ENCODE measurements at regions of chr2 and their contacts with region 1.

Region 1: DNA sequence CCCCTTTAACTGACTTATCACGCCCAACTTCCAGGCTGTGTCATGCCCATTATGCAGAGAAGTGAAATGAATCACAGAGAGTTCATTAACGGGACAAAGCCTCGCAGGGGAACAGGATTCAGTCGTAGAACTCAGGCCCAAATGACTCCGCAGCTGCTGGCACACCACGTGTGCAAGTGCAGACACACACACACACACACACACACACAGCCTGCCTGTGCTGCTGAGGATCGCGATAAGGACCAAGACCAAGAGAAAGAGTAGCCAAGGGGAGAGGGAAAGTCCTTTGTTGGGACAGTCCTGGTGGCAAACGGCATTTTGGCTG is 90.0 kb upstream of the TAF1B start:
- DNase-seq: no peak
- ATAC-seq: peak; percentile 81
- H3K4me3 ChIP-seq: peak overlapping the region; percentile 34
- H3K4me3 Mint-ChIP-seq: peak overlapping the region in 7 of 10 donors; percentile 42 to 92 (median 65)
- H3K27ac ChIP-seq: no peak overlapping the region
- H3K27ac Mint-ChIP-seq: peak overlapping the region in 6 of 9 donors; percentile 9 to 98 (median 62)
- H3K4me1 ChIP-seq: peaks cover 24 to 28% of the 10 kb centered on the region in 2 donors
- H3K4me1 Mint-ChIP-seq: peaks cover 17 to 57% (median 32%) of the 10 kb centered on the region in 7 donors
- H3K27me3 ChIP-seq: no peaks in the 10 kb centered on the region
- H3K27me3 Mint-ChIP-seq: peaks cover 16 to 36% (median 20%) of the 10 kb centered on the region in 5 donors

Region 2: GRCh38 chr2:9656270-9656766 is 96.9 kb before region 1 on chr2:
- CTCF ChIA-PET with region 1: no interaction called
- POLR2A ChIA-PET with region 1: no interaction called
- intact Hi-C with region 1: loop called in 1 of 2 experiments (anchors 2 kb)
- DNase-seq: peak in 1 of 9 donors; percentile 63
- ATAC-seq: peak; percentile 86
- H3K4me3 ChIP-seq: no peak overlapping the region
- H3K4me3 Mint-ChIP-seq: peak overlapping the region in 1 of 10 donors; percentile 68
- H3K27ac ChIP-seq: no peak overlapping the region
- H3K27ac Mint-ChIP-seq: peak overlapping the region in 1 of 9 donors; percentile 83
- H3K4me1 ChIP-seq: peaks cover 0 to 11% of the 10 kb centered on the region in 2 donors
- H3K4me1 Mint-ChIP-seq: peaks cover 0 to 36% (median 0%) of the 10 kb centered on the region in 7 donors
- H3K27me3 ChIP-seq: no peaks in the 10 kb centered on the region
- H3K27me3 Mint-ChIP-seq: peaks cover 0 to 8% (median 0%) of the 10 kb centered on the region in 5 donors

Region 3: DNA sequence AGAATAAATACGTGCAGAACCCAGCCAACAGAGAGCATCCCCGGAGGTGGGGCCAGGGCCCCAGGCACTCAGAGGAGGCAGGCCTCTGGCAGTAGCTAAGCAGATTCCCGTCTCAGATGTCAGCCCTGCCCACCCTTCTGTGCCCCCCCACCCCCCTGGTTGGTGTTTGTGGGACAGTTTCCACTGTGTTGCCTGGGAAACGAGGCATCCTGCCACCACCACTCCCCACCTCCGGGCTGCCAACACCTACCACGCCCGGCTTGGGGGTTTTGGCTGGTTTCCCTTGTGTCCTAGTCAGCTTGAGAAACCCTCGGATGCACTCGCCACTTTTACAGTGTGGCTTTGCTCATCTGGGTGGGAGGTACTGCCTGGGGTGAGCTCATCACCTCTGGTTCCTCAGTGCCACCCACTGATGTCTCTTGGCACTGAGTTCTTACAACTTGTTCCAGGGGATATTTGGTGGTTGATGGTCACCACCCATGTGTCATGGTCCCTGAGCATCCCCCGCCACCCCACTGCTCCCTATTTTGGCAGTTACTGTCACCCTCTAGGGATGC is 50.1 kb before region 1 on chr2:
- CTCF ChIA-PET with region 1: no interaction called
- POLR2A ChIA-PET with region 1: no interaction called
- intact Hi-C with region 1: loop called in 1 of 2 experiments (anchors 5 kb)
- DNase-seq: peak in 8 of 9 donors; percentile 7 to 77 (median 44)
- ATAC-seq: peak; percentile 90
- H3K4me3 ChIP-seq: peak overlapping the region; percentile 16
- H3K4me3 Mint-ChIP-seq: peak overlapping the region in 2 of 10 donors; percentile 23 to 26
- H3K27ac ChIP-seq: no peak overlapping the region
- H3K27ac Mint-ChIP-seq: peak overlapping the region in 1 of 9 donors; percentile 78
- H3K4me1 ChIP-seq: peaks cover 7 to 31% of the 10 kb centered on the region in 2 donors
- H3K4me1 Mint-ChIP-seq: peaks cover 8 to 39% (median 13%) of the 10 kb centered on the region in 7 donors
- H3K27me3 ChIP-seq: no peaks in the 10 kb centered on the region
- H3K27me3 Mint-ChIP-seq: peaks cover 0 to 4% (median 0%) of the 10 kb centered on the region in 5 donors

Region 4: DNA sequence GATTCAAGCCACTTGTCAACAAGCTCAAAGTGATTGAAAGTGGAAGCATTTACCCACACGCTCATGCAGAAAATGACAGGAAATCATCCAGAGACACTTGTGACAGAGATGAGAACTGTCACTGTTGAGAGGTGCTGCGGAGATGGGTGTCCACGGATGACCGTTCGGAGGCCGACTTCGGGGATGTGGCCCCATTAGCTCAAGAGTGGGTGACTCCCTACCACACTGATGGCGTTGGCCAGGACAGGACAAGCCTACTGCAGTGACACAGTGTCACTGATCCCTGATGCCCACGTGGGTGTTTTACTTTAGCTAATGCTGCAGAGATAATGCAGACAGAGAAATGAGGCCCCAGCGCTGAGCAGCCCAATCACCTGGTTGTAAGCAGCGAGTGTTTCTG is 41.0 kb before region 1 on chr2:
- CTCF ChIA-PET with region 1: no interaction called
- POLR2A ChIA-PET with region 1: no interaction called
- intact Hi-C with region 1: loop called in 1 of 2 experiments (anchors 2 kb)
- DNase-seq: peak in 1 of 9 donors; percentile 43
- ATAC-seq: peak; percentile 30
- H3K4me3 ChIP-seq: peak overlapping the region; percentile 25
- H3K4me3 Mint-ChIP-seq: peak overlapping the region in 2 of 10 donors; percentile 15 to 54
- H3K27ac ChIP-seq: peak overlapping the region; percentile 1
- H3K27ac Mint-ChIP-seq: peak overlapping the region in 2 of 9 donors; percentile 16 to 84
- H3K4me1 ChIP-seq: peaks cover 0 to 25% of the 10 kb centered on the region in 2 donors
- H3K4me1 Mint-ChIP-seq: peaks cover 0 to 29% (median 14%) of the 10 kb centered on the region in 7 donors
- H3K27me3 ChIP-seq: no peaks in the 10 kb centered on the region
- H3K27me3 Mint-ChIP-seq: no peaks in the 10 kb centered on the region

Region 5: GRCh38 chr2:9739531-9739964 is 13.7 kb before region 1 on chr2:
- CTCF ChIA-PET with region 1: no interaction called
- POLR2A ChIA-PET with region 1: no interaction called
- intact Hi-C with region 1: loop called (anchors 1 kb)
- DNase-seq: peak in 7 of 9 donors; percentile 18 to 53 (median 36)
- ATAC-seq: peak; percentile 70
- H3K4me3 ChIP-seq: peak overlapping the region; percentile 45
- H3K4me3 Mint-ChIP-seq: peak overlapping the region; percentile 75 to 94 (median 86)
- H3K27ac ChIP-seq: peak overlapping the region; percentile 32
- H3K27ac Mint-ChIP-seq: peak overlapping the region; percentile 77 to 96 (median 92)
- H3K4me1 ChIP-seq: peaks cover 32 to 42% of the 10 kb centered on the region in 2 donors
- H3K4me1 Mint-ChIP-seq: peaks cover 32 to 58% (median 41%) of the 10 kb centered on the region in 7 donors
- H3K27me3 ChIP-seq: no peaks in the 10 kb centered on the region
- H3K27me3 Mint-ChIP-seq: peaks cover 0 to 5% (median 0%) of the 10 kb centered on the region in 5 donors

Measured in naive thymus-derived CD4-positive, alpha-beta T cell (primary cell).